Activated CD4-positive, alpha-beta T cell treated with anti-CD3 and anti-CD28 coated beads, Interleukin-2, amount 10 ng/mL, durations not matched to agents 7 days and 5 days (primary cell): ENCODE measurements at regions of chr17 and their contacts with region 1.

Region 1: GRCh38 chr17:56819431-56820145 is 14.1 kb downstream of the C17orf67 start:
- DNase-seq: peak; percentile 83
- H3K4me3 Mint-ChIP-seq: no peak overlapping the region
- H3K27ac Mint-ChIP-seq: no peak overlapping the region
- H3K4me1 Mint-ChIP-seq: peaks cover 6% of the 10 kb centered on the region
- H3K27me3 Mint-ChIP-seq: no peaks in the 10 kb centered on the region

Region 2: GRCh38 chr17:56723421-56723820 is 96.2 kb before region 1 on chr17:
- CTCF ChIA-PET with region 1: no interaction called
- POLR2A ChIA-PET with region 1: no interaction called
- DNase-seq: no peak
- H3K4me3 Mint-ChIP-seq: no peak overlapping the region
- H3K27ac Mint-ChIP-seq: no peak overlapping the region
- H3K4me1 Mint-ChIP-seq: peaks cover 3% of the 10 kb centered on the region
- H3K27me3 Mint-ChIP-seq: no peaks in the 10 kb centered on the region

Region 3: DNA sequence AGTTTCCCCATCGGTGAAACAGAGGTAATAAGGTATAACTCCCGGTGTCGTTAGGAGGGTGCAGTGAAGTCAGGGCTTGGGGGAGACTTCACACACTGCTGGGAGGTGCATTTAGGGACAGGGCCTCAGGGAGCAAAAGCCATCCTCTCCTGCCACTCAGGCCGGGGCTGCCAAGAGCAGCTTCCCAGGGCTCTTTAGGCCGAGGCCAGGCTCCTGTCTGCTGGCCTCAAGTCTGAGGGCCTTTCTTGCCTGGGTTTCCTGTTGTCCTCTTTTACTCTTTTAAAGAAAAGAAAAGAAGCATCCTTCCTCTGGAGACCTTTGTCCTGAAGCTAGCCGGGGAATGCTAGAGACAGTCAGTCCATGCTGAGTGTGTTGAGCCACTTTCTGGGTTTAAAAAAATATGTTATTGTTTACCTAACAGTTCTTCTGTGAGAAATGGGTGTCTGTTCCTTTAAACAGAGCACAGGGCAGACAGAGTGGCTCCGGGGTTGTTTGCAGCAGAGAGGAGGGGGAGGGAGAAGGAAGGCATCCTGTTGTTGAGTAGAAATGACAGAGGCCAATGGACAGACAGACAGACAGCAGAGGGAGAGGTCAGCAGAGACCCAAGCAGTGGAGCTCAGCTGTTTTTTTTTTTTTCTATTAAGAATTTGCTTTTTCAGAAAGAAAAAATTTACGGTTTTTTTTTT is 64.9 kb before region 1 on chr17:
- CTCF ChIA-PET with region 1: no interaction called
- POLR2A ChIA-PET with region 1: no interaction called
- DNase-seq: peak; percentile 55
- H3K4me3 Mint-ChIP-seq: no peak overlapping the region
- H3K27ac Mint-ChIP-seq: peak overlapping the region; percentile 90
- H3K4me1 Mint-ChIP-seq: peaks cover 50% of the 10 kb centered on the region
- H3K27me3 Mint-ChIP-seq: no peaks in the 10 kb centered on the region

Region 4: GRCh38 chr17:56833809-56834379 is 14.3 kb after region 1 on chr17 and contains the starts of genes C17orf67 and DGKE:
- CTCF ChIA-PET with region 1: interaction called, 18 read pairs
- POLR2A ChIA-PET with region 1: no interaction called
- DNase-seq: peak; percentile 98
- H3K4me3 Mint-ChIP-seq: peak within 1 kb of the TSS; percentile 90
- H3K27ac Mint-ChIP-seq: peak within 1 kb of the TSS; percentile 93
- H3K4me1 Mint-ChIP-seq: peaks cover 61% of the 10 kb centered on the region
- H3K27me3 Mint-ChIP-seq: no peaks in the 10 kb centered on the region
- total RNA-seq, gene C17orf67: 5.1 to 5.2 TPM
- total RNA-seq, gene DGKE: 24.6 to 25.3 TPM

Region 5: DNA sequence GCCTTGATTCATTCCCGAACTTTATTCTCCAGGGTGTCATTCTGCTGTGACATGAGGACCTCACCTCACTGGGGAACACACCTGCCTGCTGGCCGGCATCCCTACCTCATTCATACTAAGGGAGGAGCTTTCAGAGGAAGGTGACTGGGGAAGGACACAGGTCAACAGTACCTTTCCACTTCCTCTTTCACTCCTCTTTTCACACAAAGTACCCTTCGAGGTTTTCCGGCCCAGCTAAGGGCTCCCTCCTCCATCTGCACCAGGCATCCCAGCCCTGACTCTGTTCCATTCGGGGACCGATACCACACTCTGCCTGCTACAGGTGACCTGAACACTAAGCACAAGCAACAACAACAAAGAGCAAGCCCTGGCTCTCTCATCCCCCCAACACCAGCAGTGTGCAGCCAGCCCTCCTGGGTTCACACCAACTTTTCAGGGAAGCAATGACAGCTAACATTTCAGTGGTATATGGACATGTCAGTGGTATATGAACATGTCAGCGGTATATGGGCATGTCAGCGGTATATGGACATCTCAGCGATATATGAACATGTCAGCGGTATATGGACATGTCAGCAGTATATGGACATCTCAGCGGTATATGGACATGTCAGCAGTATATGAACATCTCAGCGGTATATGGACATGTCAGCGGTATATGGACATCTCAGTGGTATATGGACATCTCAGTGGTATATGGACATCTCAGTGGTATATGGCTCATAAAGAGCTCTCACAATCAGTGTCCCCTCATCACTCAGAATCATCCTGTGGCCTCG is 78.2 kb after region 1 on chr17:
- CTCF ChIA-PET with region 1: no interaction called
- POLR2A ChIA-PET with region 1: no interaction called
- DNase-seq: no peak
- H3K4me3 Mint-ChIP-seq: no peak overlapping the region
- H3K27ac Mint-ChIP-seq: no peak overlapping the region
- H3K4me1 Mint-ChIP-seq: peaks cover 27% of the 10 kb centered on the region
- H3K27me3 Mint-ChIP-seq: no peaks in the 10 kb centered on the region

Region 6: GRCh38 chr17:57021226-57021940 is 201.8 kb after region 1 on chr17:
- CTCF ChIA-PET with region 1: no interaction called
- POLR2A ChIA-PET with region 1: no interaction called
- DNase-seq: no peak
- H3K4me3 Mint-ChIP-seq: no peak overlapping the region
- H3K27ac Mint-ChIP-seq: no peak overlapping the region
- H3K4me1 Mint-ChIP-seq: no peaks in the 10 kb centered on the region
- H3K27me3 Mint-ChIP-seq: peaks cover 22% of the 10 kb centered on the region